Naive thymus-derived CD4-positive, alpha-beta T cell (primary cell): ENCODE measurements at regions of chr14 and their contacts with region 1.

Region 1: DNA sequence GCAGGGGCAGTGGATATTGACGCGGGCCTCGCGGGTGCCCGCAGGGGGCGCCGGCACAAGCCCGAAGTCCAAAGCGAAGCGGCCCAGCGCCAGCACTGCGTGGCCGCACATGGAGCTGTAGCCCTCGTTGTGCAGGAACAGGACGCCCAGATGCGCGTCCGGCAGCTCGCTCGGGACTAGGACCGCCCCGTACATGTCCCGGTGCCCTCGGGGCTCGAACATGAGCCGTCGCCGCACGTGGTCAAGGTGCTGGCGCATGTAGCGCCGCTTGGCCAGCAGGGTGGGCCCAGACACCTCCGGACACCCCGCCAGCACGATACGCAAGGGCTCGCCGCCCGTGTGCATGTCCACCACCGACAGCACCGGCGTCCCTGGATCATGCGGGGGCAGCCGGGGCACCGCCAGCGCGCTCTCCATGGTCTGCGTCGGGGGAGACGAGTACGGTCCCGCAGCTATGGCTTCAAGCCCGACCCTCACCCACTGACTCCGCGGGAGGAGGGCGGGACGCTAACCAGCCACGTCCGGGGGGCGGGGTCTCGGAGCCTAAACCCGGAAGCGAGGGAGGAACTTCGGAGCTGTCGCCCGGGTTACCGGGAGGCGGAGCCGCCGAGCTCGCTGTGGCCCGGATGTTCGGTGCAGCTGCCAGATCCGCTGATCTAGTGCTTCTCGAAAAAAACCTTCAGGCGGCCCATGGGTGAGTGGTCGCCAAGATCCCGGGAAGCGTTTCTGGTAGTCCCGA is at the starts of genes JKAMP and L3HYPDH:
- DNase-seq: peak; percentile 93 to 98 (median 97)
- ATAC-seq: peak; percentile 97
- H3K4me3 ChIP-seq: peak within 1 kb of the TSS; percentile 81
- H3K4me3 Mint-ChIP-seq: peak within 1 kb of the TSS; percentile 89 to 98 (median 96)
- H3K27ac ChIP-seq: peak within 1 kb of the TSS; percentile 84
- H3K27ac Mint-ChIP-seq: peak within 1 kb of the TSS; percentile 85 to 96 (median 94)
- H3K4me1 ChIP-seq: peaks cover 18 to 20% of the 10 kb centered on the region in 2 donors
- H3K4me1 Mint-ChIP-seq: peaks cover 44 to 82% (median 76%) of the 10 kb centered on the region in 7 donors
- H3K27me3 ChIP-seq: no peaks in the 10 kb centered on the region
- H3K27me3 Mint-ChIP-seq: no peaks in the 10 kb centered on the region
- total RNA-seq, gene JKAMP: 12.2 to 33.7 (median 32.5) TPM
- total RNA-seq, gene L3HYPDH: 18.9 to 55.9 (median 24.2) TPM

Region 2: DNA sequence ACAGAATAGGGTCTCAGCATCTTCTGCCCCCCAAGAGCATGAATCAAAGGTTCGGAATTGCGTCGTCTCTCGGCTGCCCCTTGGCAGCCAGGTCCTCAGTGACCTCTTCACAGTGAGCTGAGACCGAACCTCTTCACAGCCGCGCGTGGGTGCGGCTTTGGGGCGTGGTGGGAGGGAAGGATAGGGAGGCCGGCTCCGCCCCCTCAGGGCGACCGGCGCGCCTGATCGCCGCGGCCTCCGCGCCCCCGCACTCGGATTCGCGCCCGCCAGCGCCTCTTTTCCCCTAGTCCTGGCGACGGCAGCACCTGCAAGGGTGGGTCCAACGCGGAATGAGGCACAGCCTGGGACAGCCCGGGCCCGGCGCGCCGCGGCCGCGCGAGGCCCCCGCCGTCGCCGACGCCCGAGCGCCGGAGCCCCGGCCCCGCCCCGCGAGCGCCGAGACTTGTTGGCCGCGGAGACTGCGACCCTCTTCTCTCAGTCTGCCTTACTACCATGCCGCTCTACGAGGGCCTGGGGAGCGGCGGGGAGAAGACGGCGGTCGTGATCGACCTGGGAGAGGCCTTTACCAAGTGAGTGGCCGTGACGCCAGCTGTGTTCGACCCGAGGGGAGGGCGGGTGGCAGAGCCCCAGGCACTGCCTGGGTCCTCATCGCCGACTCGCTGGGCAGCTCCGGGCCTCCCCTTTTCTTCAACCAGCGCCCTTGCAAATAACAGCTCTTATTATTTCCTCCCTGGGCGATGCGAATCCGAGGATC is 1284.2 kb before region 1 on chr14 and contains the start of gene ACTR10:
- CTCF ChIA-PET with region 1: no interaction called
- POLR2A ChIA-PET with region 1: interaction called, 4 read pairs
- intact Hi-C with region 1: loop called (anchors 1 kb)
- DNase-seq: peak; percentile 80 to 93 (median 88)
- ATAC-seq: peak; percentile 94
- H3K4me3 ChIP-seq: peak within 1 kb of the TSS; percentile 75
- H3K4me3 Mint-ChIP-seq: peak within 1 kb of the TSS; percentile 90 to 99 (median 97)
- H3K27ac ChIP-seq: peak within 1 kb of the TSS; percentile 87
- H3K27ac Mint-ChIP-seq: peak within 1 kb of the TSS; percentile 93 to 99 (median 98)
- H3K4me1 ChIP-seq: peaks cover 15 to 27% of the 10 kb centered on the region in 2 donors
- H3K4me1 Mint-ChIP-seq: peaks cover 21 to 60% (median 48%) of the 10 kb centered on the region in 7 donors
- H3K27me3 ChIP-seq: no peaks in the 10 kb centered on the region
- H3K27me3 Mint-ChIP-seq: peaks cover 0 to 7% (median 0%) of the 10 kb centered on the region in 5 donors
- total RNA-seq, gene ACTR10: 40.0 to 54.6 (median 50.4) TPM

Region 3: GRCh38 chr14:58427281-58428117 is 1056.6 kb before region 1 on chr14 and contains the starts of genes KIAA0586 and TIMM9:
- CTCF ChIA-PET with region 1: no interaction called
- POLR2A ChIA-PET with region 1: interaction called, 4 read pairs
- intact Hi-C with region 1: loop called (anchors 1 kb)
- DNase-seq: peak; percentile 82 to 98 (median 97)
- ATAC-seq: peak; percentile 94
- H3K4me3 ChIP-seq: peak within 1 kb of the TSS; percentile 88
- H3K4me3 Mint-ChIP-seq: peak within 1 kb of the TSS; percentile 82 to 100 (median 94)
- H3K27ac ChIP-seq: peak within 1 kb of the TSS; percentile 93
- H3K27ac Mint-ChIP-seq: peak within 1 kb of the TSS; percentile 95 to 99 (median 98)
- H3K4me1 ChIP-seq: peaks cover 13 to 17% of the 10 kb centered on the region in 2 donors
- H3K4me1 Mint-ChIP-seq: peaks cover 18 to 65% (median 53%) of the 10 kb centered on the region in 7 donors
- H3K27me3 ChIP-seq: no peaks in the 10 kb centered on the region
- H3K27me3 Mint-ChIP-seq: peaks cover 0 to 3% (median 0%) of the 10 kb centered on the region in 5 donors
- total RNA-seq, gene KIAA0586: 26.4 to 52.5 (median 34.8) TPM
- total RNA-seq, gene TIMM9: 22.1 to 42.5 (median 37.0) TPM

Region 4: GRCh38 chr14:59464486-59465315 is 19.4 kb before region 1 on chr14:
- CTCF ChIA-PET with region 1: interaction called, 3 read pairs
- POLR2A ChIA-PET with region 1: interaction called, 34 read pairs
- intact Hi-C with region 1: loop called (anchors 1 kb)
- DNase-seq: peak; percentile 40 to 71 (median 59)
- ATAC-seq: peak; percentile 78
- H3K4me3 ChIP-seq: peak overlapping the region; percentile 66
- H3K4me3 Mint-ChIP-seq: peak overlapping the region; percentile 85 to 94 (median 90)
- H3K27ac ChIP-seq: peak overlapping the region; percentile 65
- H3K27ac Mint-ChIP-seq: peak overlapping the region in 5 of 9 donors; percentile 60 to 82 (median 72)
- H3K4me1 ChIP-seq: peaks cover 0 to 9% of the 10 kb centered on the region in 2 donors
- H3K4me1 Mint-ChIP-seq: peaks cover 0 to 17% (median 7%) of the 10 kb centered on the region in 7 donors
- H3K27me3 ChIP-seq: no peaks in the 10 kb centered on the region
- H3K27me3 Mint-ChIP-seq: peaks cover 8 to 16% (median 12%) of the 10 kb centered on the region in 5 donors

Region 5: GRCh38 chr14:59576332-59577294 is 92.5 kb after region 1 on chr14 and contains the start of gene CCDC175:
- CTCF ChIA-PET with region 1: no interaction called
- POLR2A ChIA-PET with region 1: no interaction called
- intact Hi-C with region 1: loop called (anchors 1 to 5 kb)
- DNase-seq: peak; percentile 66 to 84 (median 78)
- ATAC-seq: peak; percentile 98
- H3K4me3 ChIP-seq: peak within 1 kb of the TSS; percentile 63
- H3K4me3 Mint-ChIP-seq: peak within 1 kb of the TSS; percentile 66 to 86 (median 78)
- H3K27ac ChIP-seq: no peak within 1 kb of the TSS
- H3K27ac Mint-ChIP-seq: peak within 1 kb of the TSS in 3 of 9 donors; percentile 8 to 26 (median 14)
- H3K4me1 ChIP-seq: peaks cover 3 to 4% of the 10 kb centered on the region in 2 donors
- H3K4me1 Mint-ChIP-seq: peaks cover 4 to 9% (median 7%) of the 10 kb centered on the region in 7 donors
- H3K27me3 ChIP-seq: no peaks in the 10 kb centered on the region
- H3K27me3 Mint-ChIP-seq: peaks cover 20 to 46% (median 29%) of the 10 kb centered on the region in 5 donors
- total RNA-seq, gene CCDC175: not detected

Region 6: DNA sequence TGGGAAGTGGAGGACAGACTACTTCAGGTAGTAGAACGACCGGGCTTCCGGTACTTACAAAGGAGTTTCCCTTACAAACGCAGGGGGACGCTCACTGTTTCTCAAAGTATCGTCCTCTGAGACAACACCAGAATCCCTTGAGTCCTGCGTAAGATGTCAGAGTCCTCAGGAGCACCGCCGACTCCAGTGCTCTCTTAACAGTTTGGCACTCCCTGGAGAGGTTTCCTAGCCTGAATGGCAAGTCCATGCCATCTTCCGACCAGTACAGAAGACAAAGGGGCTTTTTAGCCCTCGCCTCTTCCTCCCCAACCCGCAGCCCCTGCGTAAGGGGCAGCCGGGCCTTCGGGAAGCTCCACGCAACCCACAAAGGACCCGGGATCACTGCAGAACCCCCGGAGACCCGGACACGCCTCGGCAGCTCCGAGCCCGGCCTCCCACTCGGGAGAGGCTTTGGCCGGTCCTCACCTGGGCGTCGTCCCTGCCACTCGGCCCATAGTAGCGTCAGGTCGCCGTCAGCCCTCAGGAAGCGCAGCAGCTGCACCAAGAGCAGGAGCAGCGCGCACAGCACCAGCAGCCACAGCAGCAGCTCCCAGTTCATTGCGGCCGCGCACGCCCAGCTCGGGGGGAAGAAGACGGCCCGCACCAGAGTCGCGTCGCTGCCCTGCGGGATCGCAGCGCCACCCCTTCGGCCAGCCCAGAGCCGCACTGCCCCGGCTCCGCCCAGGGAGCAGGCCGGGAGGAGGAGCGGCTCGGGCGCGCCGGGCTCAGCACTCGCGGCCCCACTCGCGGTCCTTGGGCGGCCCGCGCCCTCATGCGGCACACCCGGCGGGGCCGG is 680.9 kb after region 1 on chr14 and contains the start of gene DHRS7:
- CTCF ChIA-PET with region 1: no interaction called
- POLR2A ChIA-PET with region 1: no interaction called
- intact Hi-C with region 1: loop called in 1 of 2 experiments (anchors 5 kb)
- DNase-seq: peak; percentile 47 to 75 (median 60)
- ATAC-seq: peak; percentile 85
- H3K4me3 ChIP-seq: peak within 1 kb of the TSS; percentile 85
- H3K4me3 Mint-ChIP-seq: peak within 1 kb of the TSS; percentile 86 to 99 (median 95)
- H3K27ac ChIP-seq: peak within 1 kb of the TSS; percentile 90
- H3K27ac Mint-ChIP-seq: peak within 1 kb of the TSS; percentile 91 to 99 (median 97)
- H3K4me1 ChIP-seq: peaks cover 20 to 27% of the 10 kb centered on the region in 2 donors
- H3K4me1 Mint-ChIP-seq: peaks cover 22 to 53% (median 42%) of the 10 kb centered on the region in 7 donors
- H3K27me3 ChIP-seq: no peaks in the 10 kb centered on the region
- H3K27me3 Mint-ChIP-seq: no peaks in the 10 kb centered on the region
- total RNA-seq, gene DHRS7: 29.9 to 50.9 (median 38.0) TPM

Region 7: GRCh38 chr14:60294411-60295069 is 810.5 kb after region 1 on chr14:
- CTCF ChIA-PET with region 1: no interaction called
- POLR2A ChIA-PET with region 1: no interaction called
- intact Hi-C with region 1: no loop called
- DNase-seq: no peak
- ATAC-seq: no peak
- H3K4me3 ChIP-seq: no peak overlapping the region
- H3K4me3 Mint-ChIP-seq: no peak overlapping the region
- H3K27ac ChIP-seq: no peak overlapping the region
- H3K27ac Mint-ChIP-seq: no peak overlapping the region
- H3K4me1 ChIP-seq: no peaks in the 10 kb centered on the region
- H3K4me1 Mint-ChIP-seq: peaks cover 0 to 6% (median 0%) of the 10 kb centered on the region in 7 donors
- H3K27me3 ChIP-seq: no peaks in the 10 kb centered on the region
- H3K27me3 Mint-ChIP-seq: no peaks in the 10 kb centered on the region

Region 8: GRCh38 chr14:60980811-60981632 is 1497.0 kb after region 1 on chr14 and contains the starts of genes SLC38A6 and TRMT5:
- CTCF ChIA-PET with region 1: no interaction called
- POLR2A ChIA-PET with region 1: no interaction called
- intact Hi-C with region 1: loop called in 1 of 2 experiments (anchors 5 kb)
- DNase-seq: peak; percentile 84 to 95 (median 93)
- ATAC-seq: peak; percentile 91
- H3K4me3 ChIP-seq: peak within 1 kb of the TSS; percentile 94
- H3K4me3 Mint-ChIP-seq: no peak within 1 kb of the TSS
- H3K27ac ChIP-seq: peak within 1 kb of the TSS; percentile 88
- H3K27ac Mint-ChIP-seq: no peak within 1 kb of the TSS
- H3K4me1 ChIP-seq: peaks cover 11 to 14% of the 10 kb centered on the region in 2 donors
- H3K4me1 Mint-ChIP-seq: peaks cover 12 to 39% (median 26%) of the 10 kb centered on the region in 7 donors
- H3K27me3 ChIP-seq: no peaks in the 10 kb centered on the region
- H3K27me3 Mint-ChIP-seq: no peaks in the 10 kb centered on the region
- total RNA-seq, gene SLC38A6: 8.9 to 21.9 (median 15.8) TPM
- total RNA-seq, gene TRMT5: 1.9 to 10.6 (median 6.5) TPM